K562 (cell line): ENCODE measurements at regions of chr11 and their contacts with region 1.

Region 1: GRCh38 chr11:59097113-59097708 is 9.8 kb upstream of the FAM111B start:
- DNase-seq: peak; percentile 15 to 66 (median 18)
- ATAC-seq: peak; percentile 88
- H3K4me3 ChIP-seq: no peak overlapping the region
- H3K27ac ChIP-seq: no peak overlapping the region
- H3K4me1 ChIP-seq: peaks cover 0 to 2% of the 10 kb centered on the region in 2 experiments; a peak in 1 of 5 replicates
- H3K27me3 ChIP-seq: no peaks in the 10 kb centered on the region; a peak in 1 of 5 replicates
- CTCF ChIP-seq: peak; percentile 56 to 63 (median 59); a peak in 5 of 6 replicates
- EP300 ChIP-seq: no peak
- POLR2A ChIP-seq: no peak
- RAD21 ChIP-seq: peak; percentile 41 to 52

Region 2: GRCh38 chr11:59158206-59159068 is 61.2 kb after region 1 on chr11:
- CTCF ChIA-PET with region 1: no interaction called
- POLR2A ChIA-PET with region 1: no interaction called
- in situ Hi-C with region 1: no loop called
- intact Hi-C with region 1: loop called (anchors 1 kb)
- DNase-seq: peak; percentile 61 to 77 (median 68)
- ATAC-seq: peak; percentile 97
- H3K4me3 ChIP-seq: no peak overlapping the region
- H3K27ac ChIP-seq: no peak overlapping the region
- H3K4me1 ChIP-seq: no peaks in the 10 kb centered on the region
- H3K27me3 ChIP-seq: 0 out of 5 replicates have a peak, but pooled peaks cover 0 to 4% of the 10 kb centered on the region in 2 experiments
- CTCF ChIP-seq: peak; percentile 75 to 89 (median 83)
- EP300 ChIP-seq: no peak
- POLR2A ChIP-seq: no peak
- RAD21 ChIP-seq: peak; percentile 82 to 86